Activated CD8-positive, alpha-beta T cell treated with anti-CD3 and anti-CD28 coated beads for 36 hours (primary cell): ENCODE measurements at regions of chr13 and their contacts with region 1.

Region 1: DNA sequence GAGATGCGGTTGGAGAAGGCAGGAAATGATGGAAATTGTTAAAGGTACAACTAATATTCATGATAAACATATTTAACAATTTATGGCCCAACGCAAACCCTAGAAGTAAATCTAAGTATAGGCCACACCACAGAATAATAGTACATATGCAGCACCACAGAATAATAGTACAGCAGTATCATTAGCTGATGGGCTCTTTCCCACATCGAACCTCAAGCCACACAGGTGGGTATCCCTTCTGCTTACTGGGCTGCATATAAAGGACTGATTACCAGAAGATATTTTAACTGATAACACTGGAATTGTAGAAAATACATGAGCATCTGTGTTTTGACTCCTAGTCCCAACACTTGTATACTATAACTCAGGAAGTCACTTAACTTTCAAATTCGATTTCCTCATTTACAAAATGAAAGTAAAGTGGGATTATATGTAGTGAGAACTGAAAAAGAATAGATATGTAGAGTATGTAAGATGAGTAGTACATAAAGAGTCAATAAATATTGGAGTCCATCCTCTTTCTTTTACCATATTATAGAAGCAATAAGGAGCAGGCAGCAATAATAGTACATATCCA is 91.5 kb downstream of the TSC22D1 start:
- DNase-seq: no peak
- ATAC-seq: peak; percentile 39
- H3K4me3 Mint-ChIP-seq: peak overlapping the region; percentile 55
- H3K27ac Mint-ChIP-seq: peak overlapping the region; percentile 51
- H3K4me1 Mint-ChIP-seq: peaks cover 17% of the 10 kb centered on the region
- H3K27me3 Mint-ChIP-seq: no peaks in the 10 kb centered on the region
- CTCF ChIP-seq: no peak

Region 2: GRCh38 chr13:44470638-44471562 is 13.8 kb before region 1 on chr13:
- CTCF ChIA-PET with region 1: interaction called, 15 read pairs
- POLR2A ChIA-PET with region 1: no interaction called
- intact Hi-C with region 1: no loop called
- DNase-seq: no peak
- ATAC-seq: no peak
- H3K4me3 Mint-ChIP-seq: no peak overlapping the region
- H3K27ac Mint-ChIP-seq: no peak overlapping the region
- H3K4me1 Mint-ChIP-seq: no peaks in the 10 kb centered on the region
- H3K27me3 Mint-ChIP-seq: no peaks in the 10 kb centered on the region
- CTCF ChIP-seq: peak; percentile 57

Region 3: DNA sequence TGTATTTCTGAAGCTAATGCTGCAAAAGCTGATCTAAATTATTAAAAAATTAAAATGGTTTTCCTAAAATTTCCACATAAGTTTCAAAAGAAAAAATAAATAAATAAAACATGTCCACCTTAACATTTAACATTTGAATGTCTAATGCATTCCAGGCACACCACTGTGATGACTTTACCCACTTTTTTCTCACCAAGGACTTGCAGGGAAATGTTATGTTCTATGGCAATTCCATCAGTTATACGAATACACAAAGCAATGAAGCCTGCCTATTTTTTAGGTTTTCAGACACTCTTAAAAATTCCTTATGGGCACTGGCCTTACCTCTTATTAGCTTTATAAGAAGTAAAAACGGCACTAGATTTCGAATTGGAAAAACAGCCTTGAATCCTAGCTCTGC is 81.2 kb after region 1 on chr13:
- CTCF ChIA-PET with region 1: no interaction called
- POLR2A ChIA-PET with region 1: no interaction called
- intact Hi-C with region 1: no loop called
- DNase-seq: no peak
- ATAC-seq: no peak
- H3K4me3 Mint-ChIP-seq: no peak overlapping the region
- H3K27ac Mint-ChIP-seq: no peak overlapping the region
- H3K4me1 Mint-ChIP-seq: peaks cover 37% of the 10 kb centered on the region
- H3K27me3 Mint-ChIP-seq: no peaks in the 10 kb centered on the region
- CTCF ChIP-seq: no peak

Region 4: DNA sequence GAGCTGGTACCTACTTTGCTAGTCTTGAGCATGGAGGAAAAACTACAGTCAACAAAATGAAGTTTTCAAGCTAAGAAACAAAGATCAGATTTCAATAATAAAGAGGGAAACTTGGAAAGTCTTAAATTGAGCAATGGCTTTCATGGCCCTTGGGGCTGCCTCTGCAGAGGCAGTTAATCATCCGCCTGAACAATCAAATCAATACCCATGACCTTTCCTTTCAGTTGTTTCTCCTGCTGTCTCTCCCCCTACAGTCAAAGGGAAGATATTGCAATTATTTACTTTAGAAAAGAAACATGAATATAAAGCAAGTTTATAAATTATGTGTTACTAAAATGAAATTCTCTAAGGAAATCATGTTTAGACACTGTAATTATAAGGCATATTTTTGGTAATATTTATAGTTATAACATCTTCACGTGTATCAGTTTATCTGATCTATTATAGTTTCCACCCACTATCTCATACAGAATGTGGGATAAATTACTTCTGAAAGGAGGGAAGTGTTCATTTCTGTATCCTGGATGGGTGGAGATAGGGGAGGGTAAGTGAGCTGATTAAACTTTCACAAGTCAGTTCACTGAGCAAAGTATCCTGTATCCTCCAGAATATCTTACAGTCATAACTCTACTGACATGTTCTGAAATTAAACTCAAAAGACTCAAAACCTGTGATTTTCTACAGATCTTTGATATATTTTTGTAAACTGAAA is 163.9 kb after region 1 on chr13:
- CTCF ChIA-PET with region 1: interaction called, 11 read pairs
- POLR2A ChIA-PET with region 1: interaction called, 4 read pairs
- intact Hi-C with region 1: no loop called
- DNase-seq: peak; percentile 10
- ATAC-seq: peak; percentile 71
- H3K4me3 Mint-ChIP-seq: no peak overlapping the region
- H3K27ac Mint-ChIP-seq: peak overlapping the region; percentile 26
- H3K4me1 Mint-ChIP-seq: peaks cover 21% of the 10 kb centered on the region
- H3K27me3 Mint-ChIP-seq: peaks cover 12% of the 10 kb centered on the region
- CTCF ChIP-seq: peak; percentile 69

Region 5: GRCh38 chr13:44879463-44880058 is 394.9 kb after region 1 on chr13:
- CTCF ChIA-PET with region 1: interaction called, 25 read pairs
- POLR2A ChIA-PET with region 1: no interaction called
- intact Hi-C with region 1: no loop called
- DNase-seq: peak; percentile 34
- ATAC-seq: no peak
- H3K4me3 Mint-ChIP-seq: no peak overlapping the region
- H3K27ac Mint-ChIP-seq: no peak overlapping the region
- H3K4me1 Mint-ChIP-seq: no peaks in the 10 kb centered on the region
- H3K27me3 Mint-ChIP-seq: peaks cover 5% of the 10 kb centered on the region
- CTCF ChIP-seq: peak; percentile 44

Region 6: DNA sequence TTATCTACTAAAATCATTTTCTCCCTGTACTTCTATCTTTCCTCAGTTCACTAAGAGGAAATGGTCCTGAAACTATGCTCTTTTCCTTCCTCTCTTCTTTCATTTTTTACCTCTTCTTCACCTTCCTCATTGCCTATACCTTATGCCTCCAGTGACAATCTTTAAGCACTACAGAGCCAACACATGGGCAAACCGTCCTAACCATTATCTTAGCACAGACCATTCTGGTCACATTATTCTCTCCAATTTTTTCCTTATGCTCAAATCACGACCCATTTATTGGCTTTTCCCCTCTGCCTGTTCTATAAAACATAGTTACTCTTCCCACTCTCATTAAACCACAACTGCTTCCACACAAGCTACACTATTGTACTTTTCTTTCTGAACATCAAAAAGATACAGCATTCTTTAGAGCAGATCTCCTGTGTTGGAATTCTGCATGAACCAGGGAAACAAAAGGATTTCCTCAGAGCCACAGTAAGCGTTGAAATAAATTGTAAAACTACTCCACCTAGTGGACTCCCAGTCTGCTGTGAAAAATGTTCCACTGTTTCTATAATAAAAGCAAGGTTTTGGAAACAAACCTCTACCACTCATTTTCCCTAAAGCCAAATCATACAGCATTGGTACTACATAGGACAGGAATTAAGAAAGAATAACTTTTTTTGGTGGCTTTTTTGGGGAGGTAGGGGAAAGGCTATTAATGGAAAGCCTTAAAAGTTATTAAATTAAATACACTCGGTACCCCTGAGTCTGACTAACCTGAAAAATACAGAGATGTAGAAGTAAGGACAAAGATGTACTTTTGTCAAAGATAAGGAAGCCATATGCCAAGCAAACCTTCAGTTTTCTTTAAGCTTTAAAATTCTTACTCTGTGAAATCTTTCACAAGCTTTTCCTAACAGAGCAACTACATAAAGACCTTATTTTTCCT is 485.2 kb after region 1 on chr13:
- CTCF ChIA-PET with region 1: interaction called, 11 read pairs
- POLR2A ChIA-PET with region 1: no interaction called
- intact Hi-C with region 1: loop called (anchors 5 kb)
- DNase-seq: no peak
- ATAC-seq: no peak
- H3K4me3 Mint-ChIP-seq: no peak overlapping the region
- H3K27ac Mint-ChIP-seq: no peak overlapping the region
- H3K4me1 Mint-ChIP-seq: peaks cover 1% of the 10 kb centered on the region
- H3K27me3 Mint-ChIP-seq: no peaks in the 10 kb centered on the region
- CTCF ChIP-seq: peak; percentile 81

Region 7: GRCh38 chr13:45433381-45433790 is 948.7 kb after region 1 on chr13:
- CTCF ChIA-PET with region 1: no interaction called
- POLR2A ChIA-PET with region 1: no interaction called
- intact Hi-C with region 1: no loop called
- DNase-seq: no peak
- ATAC-seq: no peak
- H3K4me3 Mint-ChIP-seq: no peak overlapping the region
- H3K27ac Mint-ChIP-seq: no peak overlapping the region
- H3K4me1 Mint-ChIP-seq: no peaks in the 10 kb centered on the region
- H3K27me3 Mint-ChIP-seq: no peaks in the 10 kb centered on the region
- CTCF ChIP-seq: no peak